ENCODE measurements at regions of chr2 and their contacts with region 1.

Region 1: GRCh38 chr2:174908284-174908683 is 96.9 kb downstream of the CHN1 start:
- DNase-seq: no peak
- ATAC-seq: no peak
- H3K4me3 ChIP-seq: no peak overlapping the region
- H3K27ac ChIP-seq: no peak overlapping the region
- H3K4me1 ChIP-seq: no peaks in the 10 kb centered on the region
- H3K27me3 ChIP-seq: no peaks in the 10 kb centered on the region
- CTCF ChIP-seq: no peak
- POLR2A ChIP-seq: no peak
- RAD21 ChIP-seq: no peak

Region 2: DNA sequence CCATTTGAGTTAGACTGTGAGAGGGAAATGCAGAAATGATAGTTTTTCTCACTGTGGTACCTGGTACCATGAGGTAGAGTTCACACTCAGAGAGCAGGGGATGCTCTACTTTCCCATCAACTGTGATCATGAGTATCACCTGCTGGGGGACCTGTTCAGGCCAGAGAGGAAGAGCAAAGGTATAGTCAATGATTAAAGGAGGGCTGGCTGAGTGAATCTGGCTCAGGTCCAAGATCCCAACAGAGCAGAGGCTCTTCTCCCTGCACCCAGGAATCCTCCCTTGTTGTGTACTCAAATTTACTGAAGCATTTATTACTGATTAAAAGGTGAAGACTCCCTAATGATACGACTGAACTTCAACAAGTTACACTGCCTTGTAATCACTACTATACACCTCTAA is 39.4 kb before region 1 on chr2:
- CTCF ChIA-PET with region 1: no interaction called
- POLR2A ChIA-PET with region 1: no interaction called
- dilution Hi-C with region 1: no loop called
- in situ Hi-C with region 1: no loop called
- intact Hi-C with region 1: loop called (anchors 5 kb)
- DNase-seq: no peak
- ATAC-seq: no peak
- H3K4me3 ChIP-seq: no peak overlapping the region
- H3K27ac ChIP-seq: no peak overlapping the region
- H3K4me1 ChIP-seq: peaks cover 3% of the 10 kb centered on the region
- H3K27me3 ChIP-seq: no peaks in the 10 kb centered on the region
- CTCF ChIP-seq: no peak
- POLR2A ChIP-seq: no peak
- RAD21 ChIP-seq: no peak

Region 3: GRCh38 chr2:174939046-174939445 is 30.8 kb after region 1 on chr2:
- CTCF ChIA-PET with region 1: no interaction called
- POLR2A ChIA-PET with region 1: no interaction called
- dilution Hi-C with region 1: no loop called
- in situ Hi-C with region 1: no loop called
- intact Hi-C with region 1: no loop called
- DNase-seq: peak; percentile 79
- ATAC-seq: peak; percentile 57
- H3K4me3 ChIP-seq: no peak overlapping the region
- H3K27ac ChIP-seq: no peak overlapping the region
- H3K4me1 ChIP-seq: no peaks in the 10 kb centered on the region
- H3K27me3 ChIP-seq: no peaks in the 10 kb centered on the region
- CTCF ChIP-seq: no peak
- POLR2A ChIP-seq: no peak
- RAD21 ChIP-seq: no peak

Region 4: GRCh38 chr2:175233135-175233719 is 324.9 kb after region 1 on chr2:
- CTCF ChIA-PET with region 1: no interaction called
- POLR2A ChIA-PET with region 1: no interaction called
- dilution Hi-C with region 1: no loop called
- in situ Hi-C with region 1: no loop called
- intact Hi-C with region 1: no loop called
- DNase-seq: peak; percentile 89
- ATAC-seq: peak; percentile 85
- H3K4me3 ChIP-seq: no peak overlapping the region
- H3K27ac ChIP-seq: no peak overlapping the region
- H3K4me1 ChIP-seq: peaks cover 5% of the 10 kb centered on the region
- H3K27me3 ChIP-seq: peaks cover 6% of the 10 kb centered on the region
- CTCF ChIP-seq: no peak
- POLR2A ChIP-seq: no peak
- RAD21 ChIP-seq: no peak